Heart right ventricle (tissue), 16 donors: ENCODE measurements at regions of chr7 and their contacts with region 1.

Region 1: DNA sequence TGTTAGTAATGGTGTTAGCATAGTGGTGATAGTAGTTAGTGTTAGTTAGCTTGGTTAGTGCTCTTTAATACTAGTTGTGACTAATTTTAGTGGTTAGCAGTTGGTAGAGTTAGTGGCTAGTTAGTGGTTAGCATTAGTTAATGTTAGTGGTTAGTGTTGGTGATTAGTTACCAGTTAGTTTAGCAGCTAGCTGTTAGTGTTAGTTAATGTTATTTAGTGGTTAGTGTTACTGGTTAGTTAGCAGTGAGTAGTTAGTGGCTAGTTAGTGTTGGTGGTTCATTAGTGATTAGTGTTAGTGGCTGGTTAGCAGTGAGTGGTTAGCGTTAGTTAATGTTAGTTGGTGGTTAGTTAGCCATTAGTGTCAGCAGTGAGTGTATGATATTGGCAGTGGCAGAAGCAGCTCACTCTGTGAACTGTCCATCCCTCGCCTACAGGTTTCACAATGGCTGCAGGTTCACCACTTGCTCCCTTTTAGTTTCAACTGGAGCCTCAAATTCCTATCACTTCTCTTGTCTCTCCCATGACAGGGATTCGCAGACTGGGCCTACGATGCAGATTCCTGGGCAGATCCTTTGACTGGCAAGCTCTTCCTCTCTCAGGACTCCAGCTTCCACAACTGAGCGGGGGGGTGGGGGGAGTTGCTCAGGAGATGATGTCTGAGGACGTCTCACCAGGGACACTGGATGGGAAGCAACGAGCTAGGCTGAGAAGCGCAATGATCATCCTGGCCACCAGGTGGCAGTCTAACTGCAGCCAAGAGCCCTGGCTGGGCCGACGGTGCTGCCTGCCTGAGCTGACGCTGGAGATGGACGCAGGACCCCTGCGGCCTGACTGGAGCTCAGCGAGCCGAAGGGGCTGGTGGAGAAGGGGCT is 19.5 kb downstream of the GHRHR start:
- DNase-seq: peak; percentile 82 to 88
- ATAC-seq: peak; percentile 84 to 92 (median 88)
- H3K4me3 ChIP-seq: no peak overlapping the region
- H3K27ac ChIP-seq: no peak overlapping the region
- H3K4me1 ChIP-seq: peaks cover 0 to 10% (median 2%) of the 10 kb centered on the region in 9 donors
- H3K27me3 ChIP-seq: peaks cover 0 to 21% (median 10%) of the 10 kb centered on the region in 7 donors
- CTCF ChIP-seq: peak; percentile 91 to 98 (median 96)

Region 2: GRCh38 chr7:31051598-31052486 is 68.6 kb after region 1 on chr7 and contains the start of gene ADCYAP1R1:
- intact Hi-C with region 1: loop called in 1 of 10 experiments (anchors 10 kb)
- DNase-seq: peak; percentile 39 to 59
- ATAC-seq: peak; percentile 29 to 88 (median 66)
- H3K4me3 ChIP-seq: peak within 1 kb of the TSS; percentile 37 to 63 (median 52)
- H3K27ac ChIP-seq: peak within 1 kb of the TSS in 3 of 10 donors; percentile 15 to 72 (median 26)
- H3K4me1 ChIP-seq: peaks cover 0 to 29% (median 7%) of the 10 kb centered on the region in 9 donors
- H3K27me3 ChIP-seq: peaks cover 0 to 52% (median 43%) of the 10 kb centered on the region in 7 donors
- CTCF ChIP-seq: peak in 3 of 9 donors; percentile 6 to 42 (median 18)
- total RNA-seq, gene ADCYAP1R1: 0.94 to 5.8 (median 1.8) TPM

Region 3: GRCh38 chr7:31122649-31123058 is 139.4 kb after region 1 on chr7:
- intact Hi-C with region 1: loop called (anchors 1 to 2 kb)
- DNase-seq: peak; percentile 40 to 77
- ATAC-seq: peak; percentile 64 to 86 (median 80)
- H3K4me3 ChIP-seq: no peak overlapping the region
- H3K27ac ChIP-seq: no peak overlapping the region
- H3K4me1 ChIP-seq: peaks cover 0 to 6% (median 0%) of the 10 kb centered on the region in 9 donors
- H3K27me3 ChIP-seq: peaks cover 0 to 7% (median 0%) of the 10 kb centered on the region in 7 donors
- CTCF ChIP-seq: peak; percentile 77 to 93 (median 89)

Region 4: GRCh38 chr7:31648288-31648687 is 665.0 kb after region 1 on chr7:
- intact Hi-C with region 1: loop called in 1 of 10 experiments (anchors 10 kb)
- DNase-seq: no peak
- ATAC-seq: no peak
- H3K4me3 ChIP-seq: no peak overlapping the region
- H3K27ac ChIP-seq: no peak overlapping the region
- H3K4me1 ChIP-seq: peaks cover 0 to 5% (median 0%) of the 10 kb centered on the region in 9 donors
- H3K27me3 ChIP-seq: peaks cover 0 to 5% (median 0%) of the 10 kb centered on the region in 7 donors
- CTCF ChIP-seq: peak in 7 of 9 donors; percentile 9 to 52 (median 45)